ENCODE measurements at regions of chr7 and their contacts with region 1.

Region 1: DNA sequence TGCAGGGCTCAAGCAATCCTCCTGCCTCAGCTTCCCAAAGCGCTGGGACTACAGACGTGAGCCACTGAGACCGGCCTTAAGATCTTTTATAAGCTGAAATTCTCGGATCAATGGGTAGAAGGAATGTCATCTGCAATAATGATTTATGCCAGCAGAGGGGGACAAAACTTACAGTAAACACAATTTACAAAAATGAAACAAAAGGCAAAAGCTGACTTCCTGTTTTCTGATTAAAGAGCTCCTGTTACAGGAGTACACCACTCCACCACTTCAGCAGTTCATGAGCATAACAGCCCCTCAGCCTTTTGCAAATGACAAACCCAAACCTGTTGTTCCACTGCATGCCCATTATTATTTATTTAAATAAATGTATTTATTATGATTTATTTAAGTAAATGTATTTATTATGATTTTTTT is 88.5 kb upstream of the ATP6V0A4 start:
- DNase-seq: peak; percentile 62
- ATAC-seq: no peak
- H3K4me3 ChIP-seq: no peak overlapping the region
- H3K27ac ChIP-seq: no peak overlapping the region
- H3K4me1 ChIP-seq: peaks cover 59% of the 10 kb centered on the region
- H3K27me3 ChIP-seq: no peaks in the 10 kb centered on the region
- CTCF ChIP-seq: peak; percentile 67
- EP300 ChIP-seq: no peak
- POLR2A ChIP-seq: no peak
- RAD21 ChIP-seq: peak; percentile 31; the same call in 1 of the 2 replicates

Region 2: GRCh38 chr7:138981332-138982203 is 95.1 kb after region 1 on chr7 and contains the start of gene KIAA1549:
- CTCF ChIA-PET with region 1: interaction called, 3 read pairs
- POLR2A ChIA-PET with region 1: interaction called, 4 read pairs
- in situ Hi-C with region 1: loop called (anchors 5 kb)
- intact Hi-C with region 1: loop called (anchors 1 kb)
- DNase-seq: peak; percentile 33
- ATAC-seq: peak; percentile 83
- H3K4me3 ChIP-seq: peak within 1 kb of the TSS; percentile 77 to 92 (median 79)
- H3K27ac ChIP-seq: no peak within 1 kb of the TSS
- H3K4me1 ChIP-seq: peaks cover 20% of the 10 kb centered on the region
- H3K27me3 ChIP-seq: peaks cover 2 to 24% of the 10 kb centered on the region in 2 experiments; a peak in 3 of 5 replicates
- CTCF ChIP-seq: peak; percentile 31; the same call in 1 of the 2 replicates
- EP300 ChIP-seq: no peak
- POLR2A ChIP-seq: no peak
- RAD21 ChIP-seq: peak; percentile 65
- total RNA-seq, gene KIAA1549: 1.8 TPM in 2 replicates

Region 3: DNA sequence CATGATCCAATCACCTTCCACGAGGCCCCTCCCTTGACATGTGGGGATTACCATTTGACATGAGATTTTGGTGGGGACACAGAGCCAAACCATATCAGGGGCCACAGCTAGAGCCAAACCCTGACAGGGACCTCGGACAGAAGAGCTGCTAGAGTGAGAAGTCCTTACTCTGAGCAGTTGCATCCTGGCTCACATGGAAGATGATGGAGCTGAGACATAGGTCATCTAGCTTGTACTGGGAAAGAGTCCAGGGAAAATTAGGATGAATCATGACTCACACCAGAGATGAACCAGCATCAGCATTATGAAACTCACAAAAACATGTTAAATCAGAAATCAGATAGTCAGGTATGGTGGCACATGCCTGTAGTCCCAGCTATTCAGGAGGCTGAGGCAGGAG is 441.9 kb after region 1 on chr7:
- CTCF ChIA-PET with region 1: no interaction called
- POLR2A ChIA-PET with region 1: no interaction called
- in situ Hi-C with region 1: no loop called
- intact Hi-C with region 1: no loop called
- DNase-seq: no peak
- ATAC-seq: no peak
- H3K4me3 ChIP-seq: no peak overlapping the region
- H3K27ac ChIP-seq: no peak overlapping the region
- H3K4me1 ChIP-seq: peaks cover 5% of the 10 kb centered on the region; the same call in 1 of the 2 replicates
- H3K27me3 ChIP-seq: no peaks in the 10 kb centered on the region
- CTCF ChIP-seq: no peak
- EP300 ChIP-seq: no peak
- POLR2A ChIP-seq: no peak
- RAD21 ChIP-seq: no peak